ENCODE measurements at regions of chr1 and their contacts with region 1.

Region 1: DNA sequence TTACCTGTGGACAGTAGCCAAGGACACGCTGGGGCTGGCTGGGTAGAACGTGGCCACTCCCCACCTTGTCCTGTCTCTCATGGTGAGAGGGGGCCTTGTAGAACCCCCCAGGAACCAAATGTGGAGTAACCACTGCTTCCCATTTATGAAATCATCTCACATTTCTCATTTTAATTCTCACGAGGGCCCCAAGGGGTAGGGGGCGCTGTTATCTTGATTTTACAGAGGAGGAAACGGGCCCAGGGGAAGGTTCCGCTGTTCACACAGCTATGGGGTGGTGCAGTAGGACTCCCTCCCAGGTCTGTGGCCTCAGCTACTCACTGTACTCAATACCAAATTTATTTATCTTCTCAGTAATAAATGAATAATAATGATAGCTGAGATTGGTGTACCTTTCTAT is 5.5 kb downstream of the SMPDL3B start:
- DNase-seq: peak; percentile 83
- ATAC-seq: peak; percentile 81
- H3K4me3 Mint-ChIP-seq: no peak overlapping the region
- H3K27ac Mint-ChIP-seq: peak overlapping the region; percentile 28
- H3K4me1 Mint-ChIP-seq: peaks cover 42% of the 10 kb centered on the region
- H3K27me3 Mint-ChIP-seq: peaks cover 8% of the 10 kb centered on the region

Region 2: DNA sequence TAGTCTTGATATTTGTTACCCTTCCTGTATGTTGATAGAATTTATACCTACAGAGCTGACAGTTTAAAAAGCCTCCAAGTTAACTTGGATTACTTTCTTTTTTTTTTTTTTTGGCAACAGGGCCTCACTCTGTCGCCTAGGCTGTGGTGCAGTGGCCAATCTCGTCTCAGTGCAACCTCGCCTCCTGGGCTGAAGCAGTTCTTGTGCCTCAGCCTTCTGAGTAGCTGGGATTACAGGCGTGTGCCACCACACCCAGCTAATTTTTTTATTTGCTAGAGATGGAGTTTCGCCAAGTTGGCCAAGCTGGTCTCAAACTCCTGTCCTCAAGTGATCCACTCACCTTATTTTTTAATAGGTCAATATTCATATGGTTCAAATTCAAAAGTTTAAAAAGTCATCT is 673.1 kb before region 1 on chr1:
- CTCF ChIA-PET with region 1: no interaction called
- POLR2A ChIA-PET with region 1: no interaction called
- DNase-seq: no peak
- ATAC-seq: no peak
- H3K4me3 Mint-ChIP-seq: no peak overlapping the region
- H3K27ac Mint-ChIP-seq: no peak overlapping the region
- H3K4me1 Mint-ChIP-seq: no peaks in the 10 kb centered on the region
- H3K27me3 Mint-ChIP-seq: no peaks in the 10 kb centered on the region

Region 3: GRCh38 chr1:27763358-27763757 is 176.9 kb before region 1 on chr1:
- CTCF ChIA-PET with region 1: no interaction called
- POLR2A ChIA-PET with region 1: no interaction called
- DNase-seq: no peak
- ATAC-seq: no peak
- H3K4me3 Mint-ChIP-seq: no peak overlapping the region
- H3K27ac Mint-ChIP-seq: no peak overlapping the region
- H3K4me1 Mint-ChIP-seq: no peaks in the 10 kb centered on the region
- H3K27me3 Mint-ChIP-seq: no peaks in the 10 kb centered on the region

Region 4: GRCh38 chr1:27804791-27805190 is 135.5 kb before region 1 on chr1:
- CTCF ChIA-PET with region 1: no interaction called
- POLR2A ChIA-PET with region 1: no interaction called
- DNase-seq: no peak
- ATAC-seq: no peak
- H3K4me3 Mint-ChIP-seq: no peak overlapping the region
- H3K27ac Mint-ChIP-seq: no peak overlapping the region
- H3K4me1 Mint-ChIP-seq: no peaks in the 10 kb centered on the region
- H3K27me3 Mint-ChIP-seq: no peaks in the 10 kb centered on the region

Region 5: GRCh38 chr1:27971674-27972073 is 31.4 kb after region 1 on chr1:
- CTCF ChIA-PET with region 1: interaction called, 38 read pairs
- POLR2A ChIA-PET with region 1: interaction called, 3 read pairs
- DNase-seq: no peak
- ATAC-seq: no peak
- H3K4me3 Mint-ChIP-seq: no peak overlapping the region
- H3K27ac Mint-ChIP-seq: no peak overlapping the region
- H3K4me1 Mint-ChIP-seq: peaks cover 12% of the 10 kb centered on the region
- H3K27me3 Mint-ChIP-seq: no peaks in the 10 kb centered on the region

Region 6: GRCh38 chr1:28160782-28161266 is 220.5 kb after region 1 on chr1:
- CTCF ChIA-PET with region 1: no interaction called
- POLR2A ChIA-PET with region 1: no interaction called
- DNase-seq: no peak
- ATAC-seq: no peak
- H3K4me3 Mint-ChIP-seq: no peak overlapping the region
- H3K27ac Mint-ChIP-seq: no peak overlapping the region
- H3K4me1 Mint-ChIP-seq: peaks cover 10% of the 10 kb centered on the region
- H3K27me3 Mint-ChIP-seq: peaks cover 27% of the 10 kb centered on the region